GM18951 (cell line): ENCODE measurements at regions of chr15 and their contacts with region 1.

Region 1: DNA sequence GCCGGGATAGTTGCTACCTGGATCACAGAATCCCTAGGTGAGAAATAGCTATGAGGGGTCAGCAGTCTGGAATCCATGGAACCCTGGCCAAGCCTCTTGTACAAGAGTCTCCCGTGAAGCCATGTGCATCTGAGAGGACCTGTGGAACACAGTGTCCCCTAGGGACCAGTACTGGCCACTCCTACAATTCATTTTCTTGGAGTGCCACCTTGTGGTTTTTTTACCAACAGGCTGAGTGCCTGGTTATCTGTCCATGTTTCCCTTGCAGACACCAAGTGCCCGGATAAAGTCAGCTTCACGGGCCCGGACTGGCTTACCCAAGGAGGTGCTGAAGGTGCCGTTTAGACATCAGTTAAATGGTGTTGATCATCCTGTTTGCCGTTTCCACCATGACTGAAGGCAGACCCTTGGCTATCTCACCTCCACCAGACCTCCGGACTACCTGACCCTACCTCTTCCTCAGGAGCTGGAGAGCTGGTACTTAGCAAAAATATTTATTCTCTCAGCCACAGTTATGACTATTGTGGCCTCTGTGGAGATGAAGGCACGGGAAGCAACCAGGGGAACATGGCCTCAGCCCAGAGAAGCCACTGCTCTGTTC is 93.9 kb downstream of the RBPMS2 start:
- POLR2A ChIP-seq: no peak

Region 2: DNA sequence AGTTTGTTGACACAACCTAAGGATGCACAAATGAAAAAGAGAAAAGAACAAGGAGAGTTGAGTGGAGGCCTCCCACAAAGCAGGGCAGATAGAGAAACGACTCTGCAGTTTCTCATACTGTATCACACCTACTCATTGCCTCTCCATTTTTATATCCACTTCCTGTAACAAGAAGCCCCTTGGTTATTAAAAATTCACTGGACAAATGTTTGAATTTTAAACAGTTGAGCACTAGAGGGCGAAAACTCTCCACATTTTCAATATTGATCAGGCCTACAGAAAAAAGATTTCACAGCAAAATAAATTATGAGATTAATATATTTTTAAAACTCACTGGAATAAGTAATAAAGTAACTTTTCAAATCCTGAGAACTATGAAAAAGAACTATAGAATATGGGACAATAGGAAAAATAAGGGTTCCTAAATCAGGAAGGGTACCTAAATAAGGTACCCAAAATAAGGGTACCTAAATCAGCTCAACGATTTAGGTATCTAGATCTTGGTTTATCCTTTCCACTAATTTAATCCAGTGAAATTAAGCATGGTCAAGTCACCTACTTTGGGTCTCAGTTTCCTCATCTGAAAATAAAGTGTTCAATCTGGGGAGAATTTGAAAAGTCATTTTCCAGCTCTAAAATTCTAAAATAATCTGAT is 471.7 kb before region 1 on chr15:
- in situ Hi-C with region 1: loop called (anchors 25 kb)
- POLR2A ChIP-seq: no peak

Region 3: DNA sequence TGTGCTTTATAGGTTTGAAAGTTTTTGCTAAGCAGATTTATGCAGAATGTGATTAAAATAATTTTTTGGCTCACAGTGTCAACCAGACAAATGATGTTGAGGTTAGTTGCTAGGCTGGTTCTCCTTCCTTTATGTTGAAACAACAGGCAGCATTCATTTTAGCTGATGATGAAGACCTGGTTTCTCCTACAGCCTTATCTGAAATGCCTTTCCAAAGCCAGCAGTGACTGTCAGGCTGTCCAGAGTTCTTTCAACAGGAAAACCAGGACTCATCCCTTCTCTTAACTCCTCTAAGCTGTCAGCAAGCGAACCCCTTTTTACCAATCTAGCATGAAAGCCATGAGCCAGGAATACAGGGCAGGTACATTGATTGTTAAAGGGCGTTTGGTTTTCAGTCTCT is 137.1 kb before region 1 on chr15:
- in situ Hi-C with region 1: no loop called
- POLR2A ChIP-seq: no peak

Region 4: GRCh38 chr15:64731012-64731806 is 49.7 kb after region 1 on chr15:
- in situ Hi-C with region 1: loop called (anchors 10 kb)
- POLR2A ChIP-seq: no peak